Astrocyte of the cerebellum (primary cell): ENCODE measurements at regions of chr10 and their contacts with region 1.

Region 1: DNA sequence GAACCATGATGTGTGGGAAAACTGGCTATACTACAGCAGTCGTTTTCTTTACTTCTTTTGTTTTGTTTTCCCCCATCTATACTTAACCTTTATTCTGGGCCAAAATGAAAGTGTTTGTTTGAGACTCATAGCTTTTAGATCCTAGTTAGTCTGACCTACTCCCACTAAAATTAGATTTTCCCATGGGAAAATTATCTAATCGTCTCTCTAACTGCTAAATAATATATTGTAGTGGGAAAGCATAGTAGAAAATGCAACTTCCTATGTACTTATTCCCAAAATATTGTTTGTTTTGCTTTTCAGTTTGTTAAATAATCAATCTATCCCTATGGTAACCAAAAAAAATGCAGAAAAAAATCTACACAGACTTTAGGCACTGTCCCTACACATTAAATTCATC is 96.6 kb downstream of the NOC3L start:
- DNase-seq: no peak
- H3K4me3 ChIP-seq: no peak overlapping the region
- CTCF ChIP-seq: no peak

Region 2: GRCh38 chr10:94224656-94225055 is 41.4 kb before region 1 on chr10:
- in situ Hi-C with region 1: loop called (anchors 5 kb)
- DNase-seq: no peak
- H3K4me3 ChIP-seq: no peak overlapping the region
- CTCF ChIP-seq: no peak

Region 3: GRCh38 chr10:94299417-94299816 is 33.3 kb after region 1 on chr10:
- in situ Hi-C with region 1: no loop called
- DNase-seq: peak; percentile 81
- H3K4me3 ChIP-seq: no peak overlapping the region
- CTCF ChIP-seq: no peak